OCI-LY7 (cell line): ENCODE measurements at regions of chr19 and their contacts with region 1.

Region 1: DNA sequence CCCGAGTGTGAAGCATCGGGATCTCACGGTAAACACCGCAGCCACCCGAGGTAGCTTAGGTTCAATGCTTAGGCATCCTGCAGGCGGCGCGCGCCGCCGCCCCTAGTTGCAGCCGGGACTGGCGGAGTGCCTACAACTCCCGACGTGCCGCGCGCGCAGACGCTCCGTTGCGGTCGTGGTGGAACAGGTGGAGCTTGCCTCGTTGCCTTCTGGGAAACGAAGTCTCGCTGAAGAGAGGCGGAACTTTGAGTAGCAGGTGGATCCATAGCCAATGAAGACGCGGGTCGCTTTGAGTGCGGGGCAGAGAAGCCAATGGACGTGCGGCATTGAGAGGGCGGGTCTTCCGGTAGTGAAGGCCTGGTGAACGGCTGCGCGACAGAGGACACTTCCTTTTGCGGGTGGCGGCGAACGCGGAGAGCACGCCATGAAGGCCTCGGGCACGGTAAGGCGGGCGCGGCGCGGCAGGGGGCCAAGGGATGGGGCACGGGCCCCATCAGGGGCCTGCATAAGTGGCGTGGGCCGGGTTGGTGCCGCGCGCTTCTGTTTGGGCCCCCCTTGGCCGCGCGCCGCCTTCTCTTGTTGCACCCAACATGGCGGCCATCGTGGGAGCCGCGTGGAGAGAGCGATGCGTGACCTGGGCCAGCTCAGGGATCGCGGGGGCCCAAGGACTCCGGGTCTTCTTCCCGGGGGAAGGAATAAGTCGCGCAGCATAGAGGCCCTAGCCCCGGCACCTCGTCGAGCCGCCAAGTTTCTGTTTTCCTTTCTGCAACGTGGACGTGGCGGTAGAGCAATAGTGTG is at the start of gene RPL18A:
- DNase-seq: peak; percentile 100
- H3K4me3 ChIP-seq: peak within 1 kb of the TSS; percentile 90
- H3K27ac ChIP-seq: peak within 1 kb of the TSS; percentile 65
- H3K4me1 ChIP-seq: peaks cover 36% of the 10 kb centered on the region
- CTCF ChIP-seq: peak; percentile 93
- total RNA-seq, gene RPL18A: 2,643 and 3,019 TPM in 2 replicates

Region 2: DNA sequence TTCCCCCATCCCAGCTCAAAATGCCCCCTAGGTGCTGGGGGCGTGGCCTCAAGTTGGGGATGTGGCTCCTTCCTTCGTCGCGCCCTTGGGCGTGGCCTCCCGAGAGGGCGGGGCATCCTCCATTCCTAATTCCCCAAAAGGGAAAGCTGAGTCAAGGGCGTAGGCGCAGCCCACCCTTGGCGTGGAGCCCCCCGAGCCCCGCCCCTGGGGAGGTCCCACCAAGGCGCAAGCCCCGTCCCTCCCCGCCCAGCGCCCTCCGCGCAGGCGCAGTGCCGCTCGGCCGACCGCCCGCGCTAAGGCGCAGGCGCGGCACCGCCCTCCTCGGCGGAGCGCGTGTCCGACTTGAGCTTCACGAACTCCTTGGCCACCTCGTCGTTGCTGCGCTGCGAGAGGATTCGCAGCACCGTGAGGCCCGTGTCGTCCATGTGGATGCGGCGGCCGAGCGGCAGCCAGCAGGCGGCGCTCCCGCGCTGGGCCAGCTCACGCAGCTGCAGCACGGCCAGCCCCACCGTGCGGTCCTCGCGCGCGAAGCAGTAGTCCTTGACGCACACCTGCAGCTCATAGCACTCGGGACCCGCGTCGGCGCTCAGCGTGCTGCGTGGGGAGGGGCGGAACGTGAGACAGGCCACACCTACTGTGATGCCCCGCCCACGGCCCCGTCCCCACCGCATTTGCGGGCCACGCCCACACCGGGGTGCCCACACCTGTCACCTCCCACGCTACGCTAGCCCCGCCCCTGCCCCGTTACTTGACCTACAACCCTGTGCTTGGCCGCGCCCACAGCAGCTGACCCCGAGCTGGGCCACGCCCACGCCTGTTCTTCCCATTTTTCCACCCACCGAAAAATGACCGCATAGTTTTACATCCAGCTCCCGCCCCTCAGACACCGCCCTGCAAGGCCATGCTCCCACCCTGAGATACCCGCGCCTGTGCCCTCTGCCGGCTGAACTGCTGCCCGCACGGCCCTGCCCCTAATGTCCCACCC is 253.7 kb before region 1 on chr19:
- CTCF ChIA-PET with region 1: interaction called, 13 read pairs
- POLR2A ChIA-PET with region 1: interaction called, 4 read pairs
- intact Hi-C with region 1: loop called (anchors 5 kb)
- DNase-seq: peak; percentile 97
- H3K4me3 ChIP-seq: peak overlapping the region; percentile 69
- H3K27ac ChIP-seq: peak overlapping the region; percentile 78
- H3K4me1 ChIP-seq: peaks cover 34% of the 10 kb centered on the region
- CTCF ChIP-seq: peak; percentile 55

Region 3: GRCh38 chr19:17718947-17719711 is 140.6 kb before region 1 on chr19 and contains the start of gene MAP1S:
- CTCF ChIA-PET with region 1: no interaction called
- POLR2A ChIA-PET with region 1: interaction called, 4 read pairs
- intact Hi-C with region 1: loop called (anchors 5 kb)
- DNase-seq: peak; percentile 81
- H3K4me3 ChIP-seq: peak within 1 kb of the TSS; percentile 95
- H3K27ac ChIP-seq: peak within 1 kb of the TSS; percentile 20
- H3K4me1 ChIP-seq: peaks cover 33% of the 10 kb centered on the region
- CTCF ChIP-seq: no peak
- total RNA-seq, gene MAP1S: 11.5 and 31.6 TPM in 2 replicates

Region 4: GRCh38 chr19:17784201-17785008 is 75.3 kb before region 1 on chr19:
- CTCF ChIA-PET with region 1: no interaction called
- POLR2A ChIA-PET with region 1: no interaction called
- intact Hi-C with region 1: loop called (anchors 2 kb)
- DNase-seq: peak; percentile 73
- H3K4me3 ChIP-seq: no peak overlapping the region
- H3K27ac ChIP-seq: no peak overlapping the region
- H3K4me1 ChIP-seq: no peaks in the 10 kb centered on the region
- CTCF ChIP-seq: peak; percentile 85

Region 5: GRCh38 chr19:17830567-17831418 is 28.9 kb before region 1 on chr19:
- CTCF ChIA-PET with region 1: interaction called, 21 read pairs
- POLR2A ChIA-PET with region 1: interaction called, 3 read pairs
- intact Hi-C with region 1: no loop called
- DNase-seq: peak; percentile 63
- H3K4me3 ChIP-seq: no peak overlapping the region
- H3K27ac ChIP-seq: no peak overlapping the region
- H3K4me1 ChIP-seq: no peaks in the 10 kb centered on the region
- CTCF ChIP-seq: no peak

Region 6: GRCh38 chr19:17932485-17933338 is 73.0 kb after region 1 on chr19 and contains the start of gene CCDC124:
- CTCF ChIA-PET with region 1: no interaction called
- POLR2A ChIA-PET with region 1: interaction called, 15 read pairs
- intact Hi-C with region 1: loop called (anchors 1 kb)
- DNase-seq: peak; percentile 96
- H3K4me3 ChIP-seq: peak within 1 kb of the TSS; percentile 92
- H3K27ac ChIP-seq: peak within 1 kb of the TSS; percentile 58
- H3K4me1 ChIP-seq: peaks cover 14% of the 10 kb centered on the region
- CTCF ChIP-seq: peak; percentile 98
- total RNA-seq, gene CCDC124: 57.5 and 68.2 TPM in 2 replicates

Region 7: GRCh38 chr19:17944301-17944700 is 84.6 kb after region 1 on chr19:
- CTCF ChIA-PET with region 1: no interaction called
- POLR2A ChIA-PET with region 1: no interaction called
- intact Hi-C with region 1: no loop called
- DNase-seq: no peak
- H3K4me3 ChIP-seq: no peak overlapping the region
- H3K27ac ChIP-seq: no peak overlapping the region
- H3K4me1 ChIP-seq: peaks cover 21% of the 10 kb centered on the region
- CTCF ChIP-seq: no peak

Region 8: GRCh38 chr19:18091217-18091608 is 231.5 kb after region 1 on chr19:
- CTCF ChIA-PET with region 1: no interaction called
- POLR2A ChIA-PET with region 1: interaction called, 10 read pairs
- intact Hi-C with region 1: no loop called
- DNase-seq: peak; percentile 83
- H3K4me3 ChIP-seq: peak overlapping the region; percentile 53
- H3K27ac ChIP-seq: peak overlapping the region; percentile 97
- H3K4me1 ChIP-seq: peaks cover 94% of the 10 kb centered on the region
- CTCF ChIP-seq: no peak